ENCODE measurements at regions of chr6 and their contacts with region 1.

Region 1: DNA sequence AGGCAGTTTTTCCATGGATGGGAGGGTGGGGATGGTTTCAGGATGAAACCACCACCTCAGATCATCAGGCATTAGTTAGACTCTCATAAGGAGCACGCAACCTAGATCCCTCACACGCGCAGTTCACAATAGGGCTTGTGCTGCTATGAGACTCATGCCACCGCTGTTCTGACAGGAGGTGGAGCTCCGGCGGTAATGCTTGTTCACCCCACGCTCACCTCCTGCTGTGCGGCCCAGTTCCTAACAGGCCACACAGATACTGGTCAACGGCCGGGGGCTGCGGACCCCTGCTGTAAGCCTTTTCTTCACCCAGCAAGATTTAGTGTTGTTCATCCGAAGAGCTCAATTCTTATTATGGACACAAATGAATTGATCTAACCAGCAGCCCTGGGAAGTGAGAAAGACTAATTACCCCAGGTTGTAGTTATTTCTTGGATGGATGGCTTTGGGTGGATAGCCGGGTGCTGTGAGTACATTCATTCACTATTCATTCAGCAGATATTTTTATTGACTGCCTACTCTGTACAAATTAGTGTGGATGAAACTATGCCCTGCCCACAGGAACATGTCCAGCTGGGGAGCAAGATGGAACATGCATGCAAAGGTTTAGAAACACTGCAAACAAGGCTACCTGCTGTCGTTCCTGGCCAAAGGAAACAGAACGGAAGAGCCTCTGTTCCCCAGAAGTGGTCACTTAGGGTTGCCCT is 57.2 kb downstream of the RIOK1 start:
- DNase-seq: peak; percentile 49
- ATAC-seq: peak; percentile 93
- H3K4me3 ChIP-seq: peak overlapping the region; percentile 16 to 55 (median 29); a peak in 5 of 6 replicates
- H3K27ac ChIP-seq: no peak overlapping the region
- H3K4me1 ChIP-seq: peaks cover 48% of the 10 kb centered on the region
- H3K27me3 ChIP-seq: peaks cover 5 to 20% of the 10 kb centered on the region in 2 experiments; a peak in 4 of 5 replicates
- CTCF ChIP-seq: peak; percentile 78
- EP300 ChIP-seq: no peak
- POLR2A ChIP-seq: no peak
- RAD21 ChIP-seq: peak; percentile 52; the same call in 1 of the 2 replicates

Region 2: GRCh38 chr6:7188492-7188891 is 258.3 kb before region 1 on chr6:
- CTCF ChIA-PET with region 1: no interaction called
- POLR2A ChIA-PET with region 1: no interaction called
- in situ Hi-C with region 1: no loop called
- intact Hi-C with region 1: no loop called
- DNase-seq: no peak
- ATAC-seq: no peak
- H3K4me3 ChIP-seq: no peak overlapping the region
- H3K27ac ChIP-seq: no peak overlapping the region
- H3K4me1 ChIP-seq: peaks cover under 1% of the 10 kb centered on the region; the same call in 1 of the 2 replicates
- H3K27me3 ChIP-seq: no peaks in the 10 kb centered on the region
- CTCF ChIP-seq: no peak
- EP300 ChIP-seq: no peak
- POLR2A ChIP-seq: no peak
- RAD21 ChIP-seq: no peak

Region 3: DNA sequence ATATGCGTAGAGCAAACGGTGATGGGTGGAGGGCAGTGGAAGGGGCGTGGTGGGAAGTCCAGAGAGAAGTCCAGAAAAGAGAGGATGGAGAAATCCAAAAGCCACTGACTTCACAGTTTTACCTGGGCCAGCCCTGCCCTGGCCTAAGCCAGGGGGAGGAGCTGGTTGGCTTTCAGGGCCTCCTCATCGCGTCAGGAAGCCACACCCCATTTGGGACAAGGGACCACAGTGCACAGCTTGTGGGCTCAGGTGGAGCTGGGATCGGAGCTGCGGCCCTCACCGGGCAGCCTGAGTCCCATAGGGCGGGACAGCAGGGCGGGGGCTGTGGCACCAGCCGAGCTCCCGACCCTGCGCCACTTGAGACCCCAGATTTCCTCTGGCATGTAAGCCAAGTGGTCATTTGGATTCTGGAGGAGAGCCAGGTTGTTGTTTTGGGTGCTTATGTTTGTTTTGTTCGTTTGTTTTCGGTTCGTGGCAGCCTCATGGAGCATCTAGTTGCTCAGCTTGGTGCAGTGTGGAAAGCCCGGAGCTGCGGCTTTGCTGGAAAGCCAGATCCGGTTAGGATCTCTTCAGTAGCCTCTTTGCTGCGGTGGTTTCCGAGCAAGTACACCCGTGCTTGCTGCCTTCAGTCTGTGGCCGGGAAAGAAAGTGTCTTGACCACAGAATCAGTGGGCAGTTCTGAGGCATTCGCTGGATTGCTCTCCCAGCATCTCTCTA is 14.9 kb before region 1 on chr6:
- CTCF ChIA-PET with region 1: no interaction called
- POLR2A ChIA-PET with region 1: interaction called, 8 read pairs
- in situ Hi-C with region 1: no loop called
- intact Hi-C with region 1: loop called (anchors 2 kb)
- DNase-seq: peak; percentile 57
- ATAC-seq: peak; percentile 83
- H3K4me3 ChIP-seq: peak overlapping the region; percentile 51 to 73 (median 58)
- H3K27ac ChIP-seq: no peak overlapping the region
- H3K4me1 ChIP-seq: peaks cover 39% of the 10 kb centered on the region
- H3K27me3 ChIP-seq: 0 out of 5 replicates have a peak, but pooled peaks cover 0 to 5% of the 10 kb centered on the region in 2 experiments
- CTCF ChIP-seq: peak; percentile 31
- EP300 ChIP-seq: no peak
- POLR2A ChIP-seq: no peak
- RAD21 ChIP-seq: 0 out of 2 replicates have a peak, but pooled peaks have one; percentile 14

Region 4: GRCh38 chr6:7463785-7464184 is 17.0 kb after region 1 on chr6:
- CTCF ChIA-PET with region 1: no interaction called
- POLR2A ChIA-PET with region 1: interaction called, 5 read pairs
- in situ Hi-C with region 1: no loop called
- intact Hi-C with region 1: loop called (anchors 2 kb)
- DNase-seq: peak; percentile 81
- ATAC-seq: peak; percentile 75
- H3K4me3 ChIP-seq: peak overlapping the region in 1 of 3 experiments; percentile 8; a peak in 1 of 6 replicates
- H3K27ac ChIP-seq: peak overlapping the region; percentile 30
- H3K4me1 ChIP-seq: peaks cover 70% of the 10 kb centered on the region
- H3K27me3 ChIP-seq: no peaks in the 10 kb centered on the region
- CTCF ChIP-seq: no peak
- EP300 ChIP-seq: peak in 1 of 2 experiments; percentile 73; a peak in 2 of 4 replicates
- POLR2A ChIP-seq: no peak
- RAD21 ChIP-seq: no peak

Region 5: DNA sequence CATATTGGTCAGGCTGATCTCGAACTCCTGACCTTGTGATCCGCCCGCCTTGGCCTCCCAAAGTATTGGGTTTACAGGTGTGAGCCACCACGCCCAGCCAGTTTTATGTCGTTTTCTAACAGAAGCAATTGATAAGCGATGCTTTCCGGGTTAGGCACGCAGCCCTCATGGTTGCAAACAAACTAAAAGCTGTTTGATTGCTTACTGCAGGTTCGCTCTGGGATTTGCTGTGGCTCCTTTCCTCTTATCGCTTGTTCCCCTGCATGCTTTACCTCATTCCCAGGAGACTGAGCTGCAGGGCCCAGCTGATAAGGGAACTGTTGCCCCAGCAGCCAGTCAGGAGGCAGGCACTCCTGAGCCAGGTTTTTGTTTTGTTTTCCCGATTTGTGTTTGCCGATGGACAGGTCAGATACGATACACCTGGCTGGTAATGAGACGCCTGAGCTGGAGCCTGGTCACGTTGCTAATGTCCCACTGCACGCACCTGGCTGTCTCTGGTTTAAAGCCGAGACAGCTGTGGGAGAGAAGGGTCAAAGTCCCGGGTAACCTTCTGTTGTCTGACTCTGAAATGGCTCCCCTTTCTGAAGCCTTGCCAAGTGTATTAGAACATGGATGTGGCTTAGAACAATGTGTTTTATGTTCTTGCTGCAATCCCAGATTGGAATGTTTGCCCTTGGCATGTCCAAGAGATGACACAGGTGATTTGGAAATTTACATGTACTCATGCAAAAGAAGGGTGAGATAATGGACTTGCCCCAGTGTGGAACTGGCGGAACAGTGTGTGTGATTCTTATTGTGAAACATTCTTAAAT is 114.6 kb after region 1 on chr6:
- CTCF ChIA-PET with region 1: no interaction called
- POLR2A ChIA-PET with region 1: no interaction called
- in situ Hi-C with region 1: no loop called
- intact Hi-C with region 1: loop called (anchors 5 kb)
- DNase-seq: peak; percentile 100
- ATAC-seq: peak; percentile 92
- H3K4me3 ChIP-seq: peak overlapping the region in 1 of 3 experiments; percentile 12; a peak in 2 of 6 replicates
- H3K27ac ChIP-seq: peak overlapping the region; percentile 78
- H3K4me1 ChIP-seq: peaks cover 62% of the 10 kb centered on the region
- H3K27me3 ChIP-seq: no peaks in the 10 kb centered on the region
- CTCF ChIP-seq: peak; percentile 22; the same call in 1 of the 2 replicates
- EP300 ChIP-seq: peak in 1 of 2 experiments; percentile 89
- POLR2A ChIP-seq: peak; percentile 31 to 60; a peak in 2 of 4 replicates
- RAD21 ChIP-seq: peak; percentile 34